Psoas muscle (tissue), 8 donors: ENCODE measurements at regions of chr3 and their contacts with region 1.

Region 1: GRCh38 chr3:170397579-170398177 is 21.0 kb upstream of the CLDN11 start:
- DNase-seq: no peak
- ATAC-seq: peak in 1 of 4 donors; percentile 14
- H3K4me3 ChIP-seq: no peak overlapping the region
- H3K27ac ChIP-seq: no peak overlapping the region
- H3K4me1 ChIP-seq: no peaks in the 10 kb centered on the region
- H3K27me3 ChIP-seq: no peaks in the 10 kb centered on the region
- CTCF ChIP-seq: no peak

Region 2: DNA sequence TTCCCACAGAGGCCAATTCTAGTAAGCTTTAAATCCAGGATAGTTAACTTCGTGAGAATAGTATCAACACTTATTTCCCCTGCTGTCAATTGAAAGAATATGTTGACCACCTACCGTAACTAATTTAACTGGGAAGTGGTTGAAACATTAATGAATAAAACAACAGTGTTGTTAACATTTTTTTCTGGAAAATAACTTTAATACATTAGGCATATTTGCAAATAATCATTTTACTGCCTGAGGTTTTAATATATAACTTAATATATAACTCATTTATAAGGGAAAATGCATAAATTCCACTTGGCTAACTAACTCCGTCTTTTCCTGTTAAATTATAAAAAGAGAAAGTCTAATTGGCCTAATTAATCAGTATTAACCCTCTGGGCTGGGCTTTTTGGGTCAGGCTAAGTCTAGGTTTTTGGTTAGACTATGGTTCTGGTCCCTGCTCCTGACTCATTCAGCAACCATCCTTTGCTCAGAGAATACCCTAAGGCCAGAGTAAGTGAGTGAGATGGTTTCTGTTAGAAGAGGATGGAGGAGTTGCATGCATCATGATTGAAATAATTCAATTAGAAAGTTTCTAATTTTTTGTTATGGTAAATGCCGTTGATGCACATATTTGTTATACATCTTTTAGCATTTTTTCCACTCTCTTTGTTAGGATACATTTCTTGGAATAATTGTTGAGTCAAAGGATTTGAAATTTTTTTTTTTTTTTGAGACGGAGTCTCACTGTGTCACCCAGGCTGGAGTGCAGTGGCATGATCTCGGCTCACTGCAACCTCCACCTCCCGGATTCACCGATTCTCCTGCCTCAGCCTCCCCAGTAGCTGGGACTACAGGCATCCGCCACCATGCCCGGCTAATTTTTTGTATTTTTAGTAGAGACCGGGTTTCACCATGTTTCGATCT is 50.9 kb before region 1 on chr3:
- intact Hi-C with region 1: loop called in 1 of 2 experiments (anchors 2 kb)
- DNase-seq: no peak
- ATAC-seq: no peak
- H3K4me3 ChIP-seq: no peak overlapping the region
- H3K27ac ChIP-seq: no peak overlapping the region
- H3K4me1 ChIP-seq: no peaks in the 10 kb centered on the region
- H3K27me3 ChIP-seq: no peaks in the 10 kb centered on the region
- CTCF ChIP-seq: no peak

Region 3: DNA sequence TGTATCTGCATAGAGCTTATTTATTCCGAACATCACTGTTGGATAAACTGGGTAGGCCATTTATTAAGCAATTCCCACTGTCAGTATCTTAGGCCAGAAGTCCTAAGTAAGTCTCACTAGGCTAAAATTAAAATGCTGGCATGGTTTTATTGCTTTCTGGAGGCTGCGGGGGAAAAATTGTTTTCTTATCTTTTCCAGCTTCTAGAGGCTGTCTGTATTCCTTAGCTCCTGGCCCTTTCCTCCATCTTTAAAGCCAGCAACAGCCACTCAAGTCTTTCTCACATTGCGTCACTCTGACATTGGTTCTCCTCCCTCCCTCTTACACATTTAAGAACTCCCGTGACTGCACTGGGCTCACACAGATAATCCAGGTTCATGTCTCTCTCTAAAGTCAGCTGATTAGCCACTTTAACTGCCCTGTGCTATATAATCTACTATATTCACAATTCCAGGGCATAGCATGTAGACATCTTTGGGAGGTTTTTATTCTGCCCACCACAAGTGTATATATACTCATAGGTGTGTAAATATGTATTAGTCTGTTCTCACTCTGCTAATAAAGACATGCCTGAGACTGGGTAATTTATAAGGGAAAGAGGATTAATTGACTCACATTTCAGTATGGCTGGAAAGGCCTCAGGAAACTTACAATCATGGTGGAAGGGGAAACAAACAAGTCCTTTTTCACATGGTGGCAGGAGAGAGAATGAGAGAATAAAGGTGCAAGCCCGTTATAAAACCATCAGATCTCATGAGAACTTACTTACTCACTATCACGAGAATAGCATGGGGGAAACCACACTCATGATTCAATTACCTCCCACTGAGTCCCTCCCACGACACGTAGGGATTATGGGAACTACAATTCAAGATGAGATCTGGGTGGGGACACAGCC is 301.7 kb after region 1 on chr3:
- intact Hi-C with region 1: no loop called
- DNase-seq: no peak
- ATAC-seq: no peak
- H3K4me3 ChIP-seq: no peak overlapping the region
- H3K27ac ChIP-seq: no peak overlapping the region
- H3K4me1 ChIP-seq: no peaks in the 10 kb centered on the region
- H3K27me3 ChIP-seq: no peaks in the 10 kb centered on the region
- CTCF ChIP-seq: no peak